Endothelial cell of umbilical vein (primary cell): ENCODE measurements at regions of chr12 and their contacts with region 1.

Region 1: GRCh38 chr12:80186727-80187217 is 87.4 kb downstream of the OTOGL start:
- DNase-seq: peak; percentile 97
- H3K4me3 ChIP-seq: no peak overlapping the region
- H3K27ac ChIP-seq: peak overlapping the region; percentile 92
- H3K4me1 ChIP-seq: peaks cover 19% of the 10 kb centered on the region
- H3K27me3 ChIP-seq: no peaks in the 10 kb centered on the region
- CTCF ChIP-seq: peak; percentile 63 to 78
- POLR2A ChIP-seq: no peak

Region 2: DNA sequence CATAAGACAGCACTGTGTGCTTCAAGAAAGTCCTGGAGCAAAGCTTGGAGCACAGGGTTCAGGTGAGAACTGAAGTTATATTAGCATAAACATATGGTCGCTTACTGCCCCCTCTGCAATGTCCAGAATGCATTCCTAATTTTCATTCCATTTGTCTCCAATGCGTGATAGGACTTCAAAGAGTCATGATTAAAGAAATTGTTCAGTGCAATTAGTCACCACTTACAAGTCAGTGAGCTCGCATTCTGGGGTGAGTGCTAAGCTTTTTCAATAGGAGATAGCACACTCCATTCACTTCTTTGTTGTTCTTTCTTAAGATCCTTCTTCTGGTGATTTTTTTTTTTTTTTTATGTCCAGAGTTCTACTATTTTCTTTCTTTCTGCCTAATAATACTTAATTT is 923.8 kb before region 1 on chr12:
- CTCF ChIA-PET with region 1: no interaction called
- POLR2A ChIA-PET with region 1: no interaction called
- dilution Hi-C with region 1: no loop called
- intact Hi-C with region 1: no loop called
- DNase-seq: no peak
- H3K4me3 ChIP-seq: no peak overlapping the region
- H3K27ac ChIP-seq: no peak overlapping the region
- H3K4me1 ChIP-seq: no peaks in the 10 kb centered on the region
- H3K27me3 ChIP-seq: no peaks in the 10 kb centered on the region
- CTCF ChIP-seq: no peak
- POLR2A ChIP-seq: no peak

Region 3: GRCh38 chr12:79407671-79408622 is 778.8 kb before region 1 on chr12:
- CTCF ChIA-PET with region 1: interaction called, 13 read pairs
- POLR2A ChIA-PET with region 1: no interaction called
- dilution Hi-C with region 1: no loop called
- intact Hi-C with region 1: loop called (anchors 1 kb)
- DNase-seq: peak; percentile 88
- H3K4me3 ChIP-seq: no peak overlapping the region
- H3K27ac ChIP-seq: peak overlapping the region; percentile 25
- H3K4me1 ChIP-seq: peaks cover 9% of the 10 kb centered on the region
- H3K27me3 ChIP-seq: no peaks in the 10 kb centered on the region
- CTCF ChIP-seq: peak; percentile 72 to 86
- POLR2A ChIP-seq: no peak

Region 4: DNA sequence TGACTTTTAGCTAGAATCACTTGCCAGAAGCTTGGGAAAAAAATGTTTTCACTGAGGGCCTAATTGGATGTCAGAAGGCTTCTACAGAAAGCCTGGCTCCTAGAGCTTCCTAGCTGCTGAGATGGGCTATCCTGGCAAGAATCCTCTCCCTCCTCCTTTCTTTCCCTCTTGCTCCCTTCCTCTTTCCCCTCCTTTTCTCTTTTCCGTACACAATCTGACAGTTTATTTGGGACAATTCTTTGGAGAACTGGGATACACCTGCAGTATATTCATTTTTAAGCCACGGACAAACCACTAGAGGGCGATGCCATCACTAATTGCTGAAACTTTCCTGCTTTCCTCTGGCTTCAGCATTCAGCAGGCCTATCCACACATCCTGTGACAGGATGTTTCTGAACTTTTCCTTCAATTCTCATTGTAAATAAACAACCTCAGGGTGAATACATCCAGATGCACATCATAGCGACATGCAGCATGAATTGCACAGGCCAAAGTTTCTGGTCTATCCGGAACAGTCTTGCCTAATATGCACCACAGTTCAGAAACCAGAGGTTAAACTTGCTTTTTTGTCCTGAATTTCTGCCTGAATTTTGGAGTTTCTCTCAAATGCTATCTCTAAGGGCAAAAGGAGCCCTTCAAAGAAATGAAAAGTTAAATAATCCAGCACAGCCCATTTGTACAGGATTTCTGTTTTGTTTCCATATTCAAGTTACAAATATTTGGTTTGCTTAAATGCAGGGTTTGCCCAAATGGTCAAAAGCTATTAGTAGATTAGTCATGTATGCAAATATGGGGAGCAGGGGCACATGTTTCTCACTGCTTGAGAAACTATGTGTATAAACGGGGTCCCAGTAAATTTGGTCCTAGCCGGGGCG is 638.8 kb before region 1 on chr12:
- CTCF ChIA-PET with region 1: interaction called, 11 read pairs
- POLR2A ChIA-PET with region 1: no interaction called
- dilution Hi-C with region 1: no loop called
- intact Hi-C with region 1: loop called (anchors 1 kb)
- DNase-seq: peak; percentile 95
- H3K4me3 ChIP-seq: peak overlapping the region in 1 of 3 experiments; percentile 37
- H3K27ac ChIP-seq: peak overlapping the region; percentile 99
- H3K4me1 ChIP-seq: peaks cover 55% of the 10 kb centered on the region
- H3K27me3 ChIP-seq: no peaks in the 10 kb centered on the region
- CTCF ChIP-seq: peak; percentile 58 to 74
- POLR2A ChIP-seq: peak; percentile 69

Region 5: DNA sequence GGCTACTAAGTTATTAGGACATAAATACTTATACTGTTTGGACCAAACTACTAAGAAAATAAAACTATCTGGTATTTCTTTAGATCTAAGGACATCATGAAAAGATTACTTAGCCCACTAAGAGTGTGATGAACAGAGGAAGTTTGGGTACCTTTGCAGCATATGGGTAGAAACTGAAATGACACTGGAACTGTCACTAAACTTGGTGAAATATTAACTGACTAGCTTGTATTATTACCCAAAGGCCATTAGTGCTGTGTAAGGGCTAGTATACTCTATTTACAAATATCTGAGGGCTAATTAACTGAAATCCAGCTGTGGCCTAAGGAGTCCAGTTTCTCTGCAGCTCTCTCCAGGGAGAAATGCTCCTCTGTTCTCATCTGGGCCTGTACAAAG is 541.5 kb before region 1 on chr12:
- CTCF ChIA-PET with region 1: no interaction called
- POLR2A ChIA-PET with region 1: no interaction called
- dilution Hi-C with region 1: no loop called
- intact Hi-C with region 1: loop called (anchors 2 kb)
- DNase-seq: no peak
- H3K4me3 ChIP-seq: no peak overlapping the region
- H3K27ac ChIP-seq: no peak overlapping the region
- H3K4me1 ChIP-seq: no peaks in the 10 kb centered on the region
- H3K27me3 ChIP-seq: no peaks in the 10 kb centered on the region
- CTCF ChIP-seq: no peak
- POLR2A ChIP-seq: no peak

Region 6: GRCh38 chr12:79737875-79738718 is 448.7 kb before region 1 on chr12:
- CTCF ChIA-PET with region 1: interaction called, 6 read pairs
- POLR2A ChIA-PET with region 1: no interaction called
- dilution Hi-C with region 1: no loop called
- intact Hi-C with region 1: loop called (anchors 2 kb)
- DNase-seq: peak; percentile 80
- H3K4me3 ChIP-seq: no peak overlapping the region
- H3K27ac ChIP-seq: no peak overlapping the region
- H3K4me1 ChIP-seq: no peaks in the 10 kb centered on the region
- H3K27me3 ChIP-seq: no peaks in the 10 kb centered on the region
- CTCF ChIP-seq: peak; percentile 48 to 49
- POLR2A ChIP-seq: no peak

Region 7: GRCh38 chr12:79844693-79845092 is 342.1 kb before region 1 on chr12:
- CTCF ChIA-PET with region 1: interaction called, 6 read pairs
- POLR2A ChIA-PET with region 1: no interaction called
- dilution Hi-C with region 1: no loop called
- intact Hi-C with region 1: loop called (anchors 2 kb)
- DNase-seq: peak; percentile 95
- H3K4me3 ChIP-seq: no peak overlapping the region
- H3K27ac ChIP-seq: peak overlapping the region; percentile 65
- H3K4me1 ChIP-seq: peaks cover 58% of the 10 kb centered on the region
- H3K27me3 ChIP-seq: no peaks in the 10 kb centered on the region
- CTCF ChIP-seq: no peak
- POLR2A ChIP-seq: peak; percentile 13

Region 8: GRCh38 chr12:79935021-79935623 is 251.7 kb before region 1 on chr12 and contains the start of gene PPP1R12A:
- CTCF ChIA-PET with region 1: interaction called, 14 read pairs
- POLR2A ChIA-PET with region 1: no interaction called
- dilution Hi-C with region 1: no loop called
- intact Hi-C with region 1: loop called (anchors 1 kb)
- DNase-seq: peak; percentile 99
- H3K4me3 ChIP-seq: peak within 1 kb of the TSS; percentile 69 to 97 (median 84)
- H3K27ac ChIP-seq: peak within 1 kb of the TSS; percentile 82
- H3K4me1 ChIP-seq: peaks cover 22% of the 10 kb centered on the region
- H3K27me3 ChIP-seq: no peaks in the 10 kb centered on the region
- CTCF ChIP-seq: peak in 1 of 2 donors; percentile 14
- POLR2A ChIP-seq: peak; percentile 92
- total RNA-seq, gene PPP1R12A: 83.9 and 86.8 TPM in 2 replicates